CD4-positive, alpha-beta memory T cell (primary cell): ENCODE measurements at regions of chr16 and their contacts with region 1.

Region 1: GRCh38 chr16:2883027-2883851 is at the start of gene FLYWCH2:
- DNase-seq: peak; percentile 99 to 100 (median 100)
- H3K4me3 ChIP-seq: peak within 1 kb of the TSS; percentile 61 to 88
- H3K4me3 Mint-ChIP-seq: peak within 1 kb of the TSS; percentile 90 to 95 (median 92)
- H3K27ac ChIP-seq: peak within 1 kb of the TSS; percentile 88
- H3K27ac Mint-ChIP-seq: peak within 1 kb of the TSS; percentile 98 to 99 (median 98)
- H3K4me1 ChIP-seq: peaks cover 7% of the 10 kb centered on the region
- H3K4me1 Mint-ChIP-seq: peaks cover 8 to 25% (median 16%) of the 10 kb centered on the region in 4 donors
- H3K27me3 ChIP-seq: no peaks in the 10 kb centered on the region
- H3K27me3 Mint-ChIP-seq: no peaks in the 10 kb centered on the region
- total RNA-seq, gene FLYWCH2: 24.1 to 27.1 TPM

Region 2: DNA sequence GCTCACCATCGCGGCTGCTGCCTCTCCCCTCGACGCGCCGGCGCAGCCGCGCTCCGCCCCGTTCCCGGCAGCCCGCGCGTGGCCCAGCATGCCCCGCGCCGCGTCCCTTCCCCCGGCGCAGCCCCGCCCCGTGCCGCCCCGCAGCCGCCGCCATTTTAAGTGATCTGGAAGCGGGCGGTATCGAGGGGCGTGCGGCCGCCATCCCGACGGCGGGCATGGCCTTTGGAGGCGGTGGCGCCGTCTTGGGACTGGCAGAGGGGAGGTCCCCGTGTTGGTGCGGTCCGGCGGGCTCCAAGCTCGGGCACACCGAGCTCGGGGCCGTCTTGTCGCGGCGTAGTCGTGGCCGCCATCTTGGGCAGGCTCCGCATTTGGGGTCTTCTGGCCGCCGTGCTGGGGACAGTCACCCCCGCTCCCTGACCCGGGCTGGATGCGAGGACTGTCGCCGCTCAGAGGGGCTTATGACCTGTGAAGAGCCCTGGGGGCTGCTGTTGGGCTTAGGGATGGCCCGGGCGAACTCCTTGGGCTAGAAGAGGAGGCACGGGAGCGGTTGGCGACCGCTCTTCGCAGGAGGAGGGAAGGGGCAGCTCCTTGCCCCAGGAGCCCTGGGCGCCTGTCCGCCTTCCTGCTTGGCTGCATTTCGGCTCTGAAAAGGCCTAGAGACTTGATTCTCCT is 105.9 kb before region 1 on chr16 and contains the start of gene ELOB:
- CTCF ChIA-PET with region 1: no interaction called
- POLR2A ChIA-PET with region 1: interaction called, 15 read pairs
- intact Hi-C with region 1: no loop called
- DNase-seq: peak; percentile 87 to 89 (median 89)
- H3K4me3 ChIP-seq: peak within 1 kb of the TSS; percentile 49 to 76
- H3K4me3 Mint-ChIP-seq: peak within 1 kb of the TSS; percentile 93 to 99 (median 94)
- H3K27ac ChIP-seq: peak within 1 kb of the TSS; percentile 99
- H3K27ac Mint-ChIP-seq: peak within 1 kb of the TSS; percentile 96 to 99 (median 98)
- H3K4me1 ChIP-seq: peaks cover 38% of the 10 kb centered on the region
- H3K4me1 Mint-ChIP-seq: peaks cover 18 to 44% (median 37%) of the 10 kb centered on the region in 4 donors
- H3K27me3 ChIP-seq: no peaks in the 10 kb centered on the region
- H3K27me3 Mint-ChIP-seq: no peaks in the 10 kb centered on the region
- total RNA-seq, gene ELOB: 83.0 to 86.8 TPM

Region 3: DNA sequence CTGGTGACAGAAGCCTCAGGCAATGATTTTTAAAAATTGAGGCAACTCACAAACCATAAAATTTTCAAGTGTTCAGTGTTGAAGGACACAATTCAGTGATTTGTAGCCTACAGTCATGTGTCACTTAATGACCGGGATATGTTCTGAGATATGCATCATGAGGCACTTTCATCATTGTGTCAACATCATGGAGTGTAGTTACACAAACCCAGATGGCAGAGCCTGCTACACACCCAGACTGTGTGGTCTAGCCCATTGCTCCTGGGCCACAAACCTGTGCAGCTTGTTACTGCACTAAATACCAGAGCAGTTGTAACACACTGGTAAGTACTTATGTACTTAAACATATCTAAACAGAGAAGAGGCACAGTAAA is 83.4 kb before region 1 on chr16:
- CTCF ChIA-PET with region 1: no interaction called
- POLR2A ChIA-PET with region 1: no interaction called
- intact Hi-C with region 1: no loop called
- DNase-seq: peak in 1 of 5 donors; percentile 18
- H3K4me3 ChIP-seq: no peak overlapping the region
- H3K4me3 Mint-ChIP-seq: no peak overlapping the region
- H3K27ac ChIP-seq: no peak overlapping the region
- H3K27ac Mint-ChIP-seq: no peak overlapping the region
- H3K4me1 ChIP-seq: no peaks in the 10 kb centered on the region
- H3K4me1 Mint-ChIP-seq: no peaks in the 10 kb centered on the region
- H3K27me3 ChIP-seq: no peaks in the 10 kb centered on the region
- H3K27me3 Mint-ChIP-seq: peaks cover 4 to 8% of the 10 kb centered on the region in 2 donors

Region 4: DNA sequence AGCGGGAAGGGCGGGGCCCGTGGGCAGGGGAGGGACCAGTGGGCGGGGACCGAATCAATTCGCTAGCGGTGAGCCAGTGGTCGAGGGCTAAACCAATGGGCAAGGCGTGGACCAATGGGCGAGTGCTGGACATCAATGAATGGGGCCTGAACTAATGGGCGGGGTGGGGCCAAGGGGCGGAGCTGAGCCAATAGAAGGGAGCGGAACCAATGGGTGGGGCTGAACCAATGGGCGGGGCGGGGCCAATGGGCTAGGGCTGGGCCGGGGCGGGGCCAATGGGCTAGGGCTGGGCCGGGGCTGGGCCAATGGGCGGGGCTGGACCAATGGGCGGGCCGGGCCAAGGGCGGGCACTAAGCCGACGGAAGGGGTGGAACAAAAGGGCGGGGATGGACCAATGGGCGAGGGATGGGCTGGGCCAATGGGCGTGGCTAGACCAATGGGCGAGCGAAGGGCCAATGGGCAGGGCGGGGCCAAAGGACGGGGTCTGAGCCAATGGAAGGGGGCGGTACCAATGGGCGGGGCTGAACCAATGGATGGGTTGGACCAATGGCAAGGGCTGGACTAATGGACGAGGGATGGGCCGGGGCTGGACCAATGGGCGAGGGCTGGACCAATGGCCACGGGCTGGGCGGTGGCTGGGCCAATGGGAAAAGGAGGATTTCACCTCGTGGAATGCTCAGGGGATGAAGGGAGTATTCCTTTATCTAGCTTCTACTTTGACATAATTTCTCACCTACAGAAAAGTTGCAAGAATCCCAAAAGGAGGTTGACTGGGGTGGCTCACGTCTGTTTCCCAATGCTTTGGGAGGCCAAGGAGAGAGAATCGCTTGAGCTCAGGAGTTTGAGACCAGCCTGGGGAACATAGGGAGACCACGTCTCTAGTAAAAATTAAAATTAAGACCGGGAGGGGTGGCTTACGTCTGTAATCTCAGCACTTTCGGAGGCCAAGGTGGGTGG is 22.5 kb after region 1 on chr16:
- CTCF ChIA-PET with region 1: interaction called, 11 read pairs
- POLR2A ChIA-PET with region 1: interaction called, 54 read pairs
- intact Hi-C with region 1: loop called (anchors 1 kb)
- DNase-seq: peak; percentile 85 to 91 (median 88)
- H3K4me3 ChIP-seq: peak overlapping the region; percentile 72 to 84
- H3K4me3 Mint-ChIP-seq: peak overlapping the region; percentile 88 to 96 (median 92)
- H3K27ac ChIP-seq: peak overlapping the region; percentile 63
- H3K27ac Mint-ChIP-seq: peak overlapping the region; percentile 77 to 96 (median 92)
- H3K4me1 ChIP-seq: peaks cover 12% of the 10 kb centered on the region
- H3K4me1 Mint-ChIP-seq: peaks cover 11 to 35% (median 25%) of the 10 kb centered on the region in 4 donors
- H3K27me3 ChIP-seq: no peaks in the 10 kb centered on the region
- H3K27me3 Mint-ChIP-seq: no peaks in the 10 kb centered on the region

Region 5: DNA sequence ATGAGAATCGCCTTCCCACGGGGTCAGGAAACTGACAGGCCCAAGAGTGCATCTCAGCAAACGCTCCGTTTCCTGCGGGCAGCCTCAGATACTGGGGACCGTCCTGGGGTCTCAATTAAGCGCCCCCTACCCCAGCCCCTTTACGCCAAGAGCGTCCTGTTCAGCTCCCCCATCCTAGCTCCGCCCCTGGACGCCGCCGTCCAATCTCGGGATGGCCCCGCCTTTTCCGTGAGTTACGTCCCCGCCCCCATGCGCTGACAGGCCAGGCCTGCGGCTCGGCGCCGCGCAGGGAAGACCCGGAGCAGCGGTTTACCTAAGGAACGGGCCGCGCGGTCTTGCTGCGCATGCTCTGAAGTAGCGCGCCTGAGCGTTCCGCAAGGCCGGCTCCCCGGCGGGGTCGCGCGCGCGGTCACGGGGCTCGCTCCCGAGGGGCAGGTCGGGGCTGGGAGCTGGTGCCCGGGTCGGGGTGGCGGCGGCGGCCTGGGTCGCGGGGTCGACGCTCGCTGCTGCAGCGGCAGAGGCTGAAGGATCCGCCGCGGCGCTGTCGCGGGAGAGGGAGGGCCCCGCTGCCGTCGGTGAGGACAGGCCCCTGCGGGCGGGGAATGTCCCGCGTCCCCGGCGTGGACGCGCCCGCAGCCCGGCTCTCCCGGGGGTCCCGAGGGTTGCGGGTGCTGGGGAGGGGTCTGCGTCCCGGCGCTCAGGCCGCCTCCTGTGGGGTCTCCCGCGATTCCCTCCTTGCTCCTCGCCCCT is 28.5 kb after region 1 on chr16 and contains the start of gene FLYWCH1:
- CTCF ChIA-PET with region 1: interaction called, 6 read pairs
- POLR2A ChIA-PET with region 1: interaction called, 54 read pairs
- intact Hi-C with region 1: loop called (anchors 1 kb)
- DNase-seq: peak; percentile 97 to 98 (median 97)
- H3K4me3 ChIP-seq: peak within 1 kb of the TSS; percentile 78 to 84
- H3K4me3 Mint-ChIP-seq: peak within 1 kb of the TSS; percentile 91 to 97 (median 92)
- H3K27ac ChIP-seq: peak within 1 kb of the TSS; percentile 72
- H3K27ac Mint-ChIP-seq: peak within 1 kb of the TSS; percentile 87 to 97 (median 94)
- H3K4me1 ChIP-seq: peaks cover 20% of the 10 kb centered on the region
- H3K4me1 Mint-ChIP-seq: peaks cover 13 to 32% (median 23%) of the 10 kb centered on the region in 4 donors
- H3K27me3 ChIP-seq: no peaks in the 10 kb centered on the region
- H3K27me3 Mint-ChIP-seq: no peaks in the 10 kb centered on the region
- total RNA-seq, gene FLYWCH1: 121 to 123 TPM

Region 6: GRCh38 chr16:2926650-2927646 is 43.7 kb after region 1 on chr16:
- CTCF ChIA-PET with region 1: interaction called, 6 read pairs
- POLR2A ChIA-PET with region 1: interaction called, 13 read pairs
- intact Hi-C with region 1: no loop called
- DNase-seq: peak; percentile 85 to 89 (median 87)
- H3K4me3 ChIP-seq: no peak overlapping the region
- H3K4me3 Mint-ChIP-seq: peak overlapping the region in 5 of 8 donors; percentile 13 to 56 (median 36)
- H3K27ac ChIP-seq: no peak overlapping the region
- H3K27ac Mint-ChIP-seq: peak overlapping the region; percentile 0 to 90 (median 53)
- H3K4me1 ChIP-seq: peaks cover 12% of the 10 kb centered on the region
- H3K4me1 Mint-ChIP-seq: peaks cover 7 to 21% (median 16%) of the 10 kb centered on the region in 4 donors
- H3K27me3 ChIP-seq: no peaks in the 10 kb centered on the region
- H3K27me3 Mint-ChIP-seq: no peaks in the 10 kb centered on the region

Region 7: GRCh38 chr16:2968738-2969544 is 85.7 kb after region 1 on chr16 and contains the start of gene PAQR4:
- CTCF ChIA-PET with region 1: no interaction called
- POLR2A ChIA-PET with region 1: interaction called, 3 read pairs
- intact Hi-C with region 1: loop called (anchors 5 kb)
- DNase-seq: peak; percentile 67 to 79 (median 76)
- H3K4me3 ChIP-seq: peak within 1 kb of the TSS; percentile 28 to 64
- H3K4me3 Mint-ChIP-seq: peak within 1 kb of the TSS; percentile 68 to 84 (median 78)
- H3K27ac ChIP-seq: peak within 1 kb of the TSS; percentile 26
- H3K27ac Mint-ChIP-seq: peak within 1 kb of the TSS in 3 of 7 donors; percentile 52 to 78 (median 62)
- H3K4me1 ChIP-seq: peaks cover 44% of the 10 kb centered on the region
- H3K4me1 Mint-ChIP-seq: peaks cover 3 to 33% (median 20%) of the 10 kb centered on the region in 4 donors
- H3K27me3 ChIP-seq: peaks cover 23% of the 10 kb centered on the region
- H3K27me3 Mint-ChIP-seq: peaks cover 8 to 15% of the 10 kb centered on the region in 2 donors
- total RNA-seq, gene PAQR4: 1.5 to 1.7 TPM